ENCODE measurements at regions of chr2 and their contacts with region 1.

Region 1: DNA sequence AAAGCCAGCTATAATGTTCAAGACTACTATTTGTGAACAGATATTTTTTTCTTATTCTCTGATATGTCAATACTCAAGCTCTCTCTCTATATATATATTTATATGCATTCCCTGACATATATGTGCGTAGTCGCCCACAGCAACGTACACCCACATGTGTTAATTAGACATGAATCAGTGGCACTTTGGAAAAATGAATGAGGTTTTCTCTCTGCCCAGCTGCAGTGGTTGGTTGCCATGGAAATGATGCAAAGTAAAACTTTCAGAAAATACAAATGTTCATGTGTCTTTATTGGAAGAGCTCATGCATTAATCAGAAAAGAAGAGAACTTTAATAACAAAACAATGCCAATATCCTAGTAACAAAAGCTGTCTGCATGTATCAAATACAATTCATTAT is 34.7 kb downstream of the UNC80 start:
- DNase-seq: no peak

Region 2: GRCh38 chr2:209762563-209762962 is 43.8 kb before region 1 on chr2:
- intact Hi-C with region 1: loop called in 1 of 2 experiments (anchors 2 kb)
- DNase-seq: no peak

Measured in posterior vena cava (tissue), 2 donors.